HEK293 (cell line): ENCODE measurements at regions of chr7 and their contacts with region 1.

Region 1: GRCh38 chr7:48299580-48300169 is 128.4 kb downstream of the ABCA13 start:
- H3K4me3 ChIP-seq: no peak overlapping the region
- H3K27ac ChIP-seq: no peak overlapping the region
- H3K4me1 ChIP-seq: no peaks in the 10 kb centered on the region
- CTCF ChIP-seq: 0 out of 2 replicates have a peak, but pooled peaks have one; percentile 25

Region 2: DNA sequence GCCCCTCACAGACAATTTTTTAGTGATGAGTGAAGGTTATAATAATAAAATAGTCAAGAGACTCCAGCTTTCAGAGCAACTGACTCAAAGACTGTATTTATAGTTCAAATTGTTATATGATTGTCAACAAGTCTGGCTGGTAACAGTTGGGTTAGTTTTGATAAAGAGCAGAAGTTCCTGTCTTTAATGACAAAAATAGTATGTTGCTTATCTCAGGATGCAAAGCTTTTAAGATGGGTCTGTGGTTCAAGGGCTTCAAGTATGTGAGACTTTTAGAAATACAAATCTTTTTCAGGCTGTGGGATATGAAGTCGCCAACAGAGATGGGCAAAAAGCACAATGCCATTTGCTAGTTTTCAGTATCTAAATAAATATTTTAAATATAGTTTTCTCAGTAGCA is 10.0 kb before region 1 on chr7:
- CTCF ChIA-PET with region 1: interaction called, 12 read pairs
- POLR2A ChIA-PET with region 1: no interaction called
- H3K4me3 ChIP-seq: no peak overlapping the region
- H3K27ac ChIP-seq: no peak overlapping the region
- H3K4me1 ChIP-seq: no peaks in the 10 kb centered on the region
- CTCF ChIP-seq: no peak

Region 3: DNA sequence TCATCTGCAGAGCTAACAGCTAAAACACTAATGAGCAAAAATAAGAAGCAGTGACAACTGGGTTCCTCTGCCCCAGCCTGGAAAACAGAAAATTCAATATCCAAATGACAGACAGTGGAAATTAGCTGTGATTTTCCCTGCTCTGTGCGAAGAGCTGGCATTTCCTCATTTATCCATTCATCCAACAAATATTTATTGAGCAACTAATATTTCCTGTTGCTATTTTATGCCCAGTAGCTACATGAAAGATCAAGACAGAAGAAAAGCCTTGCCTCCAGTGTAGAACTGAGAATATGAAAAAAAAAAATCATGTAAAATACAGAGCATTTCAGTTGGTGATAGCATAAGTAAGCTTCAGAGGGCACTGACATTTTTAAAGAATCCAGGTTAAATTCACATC is 12.5 kb after region 1 on chr7:
- CTCF ChIA-PET with region 1: interaction called, 11 read pairs
- POLR2A ChIA-PET with region 1: no interaction called
- H3K4me3 ChIP-seq: no peak overlapping the region
- H3K27ac ChIP-seq: no peak overlapping the region
- H3K4me1 ChIP-seq: no peaks in the 10 kb centered on the region
- CTCF ChIP-seq: no peak